ENCODE measurements at regions of chr18 and their contacts with region 1.

Region 1: DNA sequence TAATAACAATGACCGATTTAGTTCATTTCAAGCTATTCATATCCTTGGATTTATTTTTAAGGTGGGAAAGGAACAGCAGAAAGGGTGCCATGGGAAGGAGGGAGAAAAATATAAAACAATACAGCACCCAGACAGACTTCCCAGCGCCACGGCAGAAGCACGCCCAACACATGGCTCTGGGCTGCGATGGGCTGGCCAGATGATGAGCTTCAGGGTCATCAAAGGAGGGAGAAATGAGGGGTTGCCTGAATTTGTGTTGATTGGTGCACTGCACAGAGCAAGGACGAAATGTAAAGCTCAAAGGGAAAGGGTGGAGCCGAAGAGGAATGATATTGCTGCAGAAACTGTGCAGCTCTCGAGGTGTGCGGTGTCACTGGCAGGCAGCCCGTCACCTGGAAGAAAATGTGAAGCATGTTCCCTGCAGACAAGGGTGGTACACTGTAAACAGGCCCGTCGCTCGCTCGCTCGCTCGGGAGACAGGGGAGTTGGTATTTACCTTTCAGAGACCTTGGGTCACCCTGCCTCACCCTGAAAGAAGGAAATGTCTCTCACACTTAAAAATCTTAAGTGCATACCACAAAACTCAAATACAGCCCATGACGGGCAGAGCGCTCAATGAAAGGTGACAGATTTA is 195.5 kb upstream of the CTAGE1 start:
- DNase-seq: peak in 1 of 2 experiments; percentile 41
- H3K4me3 ChIP-seq: no peak overlapping the region
- H3K27ac ChIP-seq: no peak overlapping the region
- H3K4me1 ChIP-seq: no peaks in the 10 kb centered on the region
- H3K27me3 ChIP-seq: no peaks in the 10 kb centered on the region
- CTCF ChIP-seq: no peak

Region 2: DNA sequence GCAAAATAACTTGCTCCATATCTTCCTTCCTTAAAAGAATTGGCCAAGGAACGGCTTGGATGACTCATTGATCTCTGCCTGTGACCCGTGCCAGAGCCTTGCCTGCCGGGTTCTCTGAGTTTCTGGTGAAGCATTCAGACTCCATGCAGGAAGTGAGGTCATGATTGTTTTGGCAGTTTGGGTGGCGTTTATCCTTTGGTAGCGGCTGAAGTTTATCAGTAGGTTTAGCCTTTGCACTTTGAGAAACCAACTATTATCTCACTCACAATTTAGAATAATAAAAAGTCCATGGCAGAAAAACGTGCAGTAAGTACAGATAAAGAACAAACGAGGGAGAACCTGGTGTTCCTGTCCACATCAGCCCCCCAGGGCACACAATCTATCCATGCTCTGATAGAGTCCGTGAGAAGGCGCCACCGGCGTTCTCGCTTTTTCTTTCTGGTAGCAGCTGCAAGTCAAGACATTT is 180.5 kb before region 1 on chr18:
- CTCF ChIA-PET with region 1: no interaction called
- POLR2A ChIA-PET with region 1: no interaction called
- intact Hi-C with region 1: no loop called
- DNase-seq: peak; percentile 60 to 81
- H3K4me3 ChIP-seq: 0 out of 2 replicates have a peak overlapping the region, but pooled peaks have one; percentile 12
- H3K27ac ChIP-seq: peak overlapping the region; percentile 45
- H3K4me1 ChIP-seq: peaks cover 23% of the 10 kb centered on the region
- H3K27me3 ChIP-seq: no peaks in the 10 kb centered on the region
- CTCF ChIP-seq: no peak

Region 3: GRCh38 chr18:22667616-22668422 is 54.6 kb after region 1 on chr18:
- CTCF ChIA-PET with region 1: no interaction called
- POLR2A ChIA-PET with region 1: no interaction called
- intact Hi-C with region 1: loop called (anchors 1 kb)
- DNase-seq: peak; percentile 53 to 82
- H3K4me3 ChIP-seq: no peak overlapping the region
- H3K27ac ChIP-seq: peak overlapping the region; percentile 60
- H3K4me1 ChIP-seq: peaks cover 17% of the 10 kb centered on the region
- H3K27me3 ChIP-seq: no peaks in the 10 kb centered on the region
- CTCF ChIP-seq: no peak

Measured in PC-9 (cell line).